ENCODE measurements at regions of chr17 and their contacts with region 1.

Region 1: DNA sequence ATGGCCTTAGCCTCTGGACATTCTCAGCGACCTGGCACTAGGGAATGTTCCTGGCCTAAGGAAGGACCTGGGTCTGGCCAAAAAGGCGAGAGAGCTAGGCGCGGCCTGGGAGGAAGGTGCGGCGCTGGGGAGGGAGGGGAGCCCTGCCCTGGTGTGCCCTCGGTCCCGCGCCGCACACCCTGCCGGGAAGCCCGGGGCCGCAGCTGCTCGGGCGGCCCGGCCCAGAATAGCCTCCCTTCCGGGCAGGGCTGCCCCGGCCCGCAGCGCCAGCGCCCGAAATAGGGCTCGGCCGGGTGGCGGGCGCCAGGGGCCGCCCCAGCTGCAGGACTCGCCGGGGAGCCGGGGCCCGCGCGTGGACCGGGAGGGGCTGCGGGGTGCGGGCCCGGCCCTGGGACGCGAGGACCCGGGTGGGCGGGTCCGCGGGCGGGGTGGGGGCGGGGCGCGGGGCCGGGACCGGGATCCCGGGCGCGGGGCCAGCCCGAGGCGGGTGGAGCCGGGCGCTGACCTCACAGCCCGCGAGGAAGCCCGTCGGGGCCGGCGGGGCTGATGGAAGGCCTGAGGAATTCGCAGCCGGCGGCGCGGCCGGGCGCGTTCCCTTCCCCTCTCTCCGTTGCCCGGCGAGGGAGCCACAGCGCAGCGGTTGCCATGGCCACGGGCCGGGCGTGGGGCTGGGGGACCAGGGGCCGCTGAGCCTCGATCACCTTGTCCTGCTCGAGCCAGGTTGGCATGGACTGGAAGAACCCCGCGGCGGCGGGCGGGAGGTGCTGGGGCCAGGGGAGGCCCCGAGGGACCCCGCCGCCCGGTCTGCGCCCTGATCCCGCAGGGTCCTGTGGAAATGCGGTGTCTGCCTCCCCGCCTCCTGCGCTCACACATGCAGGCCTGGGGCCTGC is 18.1 kb downstream of the SOCS3 start:
- DNase-seq: peak in 3 of 10 donors; percentile 14 to 44 (median 36)
- ATAC-seq: peak in 1 of 2 donors; percentile 29
- H3K4me3 Mint-ChIP-seq: peak overlapping the region in 9 of 10 donors; percentile 24 to 87 (median 67)
- H3K27ac Mint-ChIP-seq: peak overlapping the region in 3 of 10 donors; percentile 65 to 99 (median 75)
- H3K4me1 Mint-ChIP-seq: peaks cover 23 to 82% (median 66%) of the 10 kb centered on the region in 4 donors
- H3K27me3 Mint-ChIP-seq: no peaks in the 10 kb centered on the region

Region 2: GRCh38 chr17:78360371-78361224 is 18.8 kb after region 1 on chr17:
- POLR2A ChIA-PET with region 1: interaction called, 55 read pairs
- DNase-seq: peak; percentile 66 to 92 (median 84)
- ATAC-seq: peak; percentile 15 to 29
- H3K4me3 Mint-ChIP-seq: peak overlapping the region; percentile 74 to 91 (median 86)
- H3K27ac Mint-ChIP-seq: peak overlapping the region; percentile 59 to 96 (median 94)
- H3K4me1 Mint-ChIP-seq: peaks cover 15 to 50% (median 43%) of the 10 kb centered on the region in 4 donors
- H3K27me3 Mint-ChIP-seq: no peaks in the 10 kb centered on the region

Region 3: GRCh38 chr17:78409191-78409928 is 67.6 kb after region 1 on chr17:
- POLR2A ChIA-PET with region 1: no interaction called
- DNase-seq: no peak
- ATAC-seq: no peak
- H3K4me3 Mint-ChIP-seq: no peak overlapping the region
- H3K27ac Mint-ChIP-seq: peak overlapping the region; percentile 21 to 85 (median 59)
- H3K4me1 Mint-ChIP-seq: peaks cover 24 to 71% (median 41%) of the 10 kb centered on the region in 4 donors
- H3K27me3 Mint-ChIP-seq: no peaks in the 10 kb centered on the region

Measured in naive thymus-derived CD8-positive, alpha-beta T cell (primary cell).